Gastrocnemius medialis (tissue), 4 donors: ENCODE measurements at regions of chr18 and their contacts with region 1.

Region 1: DNA sequence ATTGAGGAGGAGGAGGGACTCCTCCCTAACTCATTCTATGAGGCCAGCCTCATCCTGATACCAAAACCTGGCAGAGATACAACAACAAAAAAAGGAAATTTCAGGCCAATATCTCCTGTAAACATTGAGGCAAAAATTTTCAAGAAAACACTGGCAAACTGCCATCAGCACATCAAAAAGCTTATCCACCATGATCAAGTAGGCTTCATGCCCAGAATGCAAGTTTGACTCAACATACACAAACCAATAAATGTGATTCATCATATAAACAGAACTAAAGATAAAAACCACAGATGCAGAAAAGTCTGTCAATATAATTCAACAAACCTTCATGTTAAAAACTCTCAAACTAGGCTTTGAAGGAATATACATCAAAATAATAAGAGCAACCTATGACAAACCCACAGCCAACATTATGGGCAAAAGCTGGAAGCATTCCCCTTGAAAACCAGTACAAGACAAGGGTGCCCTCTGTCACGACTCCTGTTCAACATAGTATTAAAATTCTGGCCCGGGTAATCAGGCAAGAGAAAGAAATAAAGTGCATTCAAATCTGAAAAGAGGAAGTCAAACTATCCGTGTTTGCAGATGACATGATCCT is 1014.3 kb downstream of the CBLN2 start:
- DNase-seq: no peak
- ATAC-seq: no peak
- H3K4me3 ChIP-seq: no peak overlapping the region
- H3K27ac ChIP-seq: no peak overlapping the region
- H3K4me1 ChIP-seq: no peaks in the 10 kb centered on the region
- H3K27me3 ChIP-seq: no peaks in the 10 kb centered on the region
- CTCF ChIP-seq: no peak
- POLR2A ChIP-seq: no peak

Region 2: DNA sequence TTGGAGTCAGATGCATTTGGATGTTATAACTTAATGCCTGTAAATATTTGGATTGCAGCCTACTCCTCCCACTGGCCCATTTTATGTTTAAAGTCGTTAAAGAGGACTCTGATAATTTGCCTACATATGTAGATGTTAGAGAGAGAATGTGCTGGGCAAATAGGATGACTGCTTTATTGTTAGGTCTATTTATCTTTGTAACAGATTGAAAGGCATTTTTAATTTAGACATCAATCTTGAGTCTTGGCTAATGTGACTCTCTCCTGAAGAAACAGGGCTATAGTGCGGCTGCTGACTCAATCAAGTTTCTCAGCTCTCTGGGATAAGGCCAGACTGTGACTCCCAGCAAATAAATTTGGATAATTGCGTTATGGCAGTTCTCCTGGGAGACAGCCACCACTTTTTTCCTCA is 87.1 kb before region 1 on chr18:
- in situ Hi-C with region 1: loop called in 1 of 4 experiments (anchors 25 kb)
- intact Hi-C with region 1: no loop called
- DNase-seq: no peak
- ATAC-seq: no peak
- H3K4me3 ChIP-seq: no peak overlapping the region
- H3K27ac ChIP-seq: no peak overlapping the region
- H3K4me1 ChIP-seq: no peaks in the 10 kb centered on the region
- H3K27me3 ChIP-seq: no peaks in the 10 kb centered on the region
- CTCF ChIP-seq: no peak
- POLR2A ChIP-seq: no peak